Activated CD4-positive, alpha-beta T cell treated with anti-CD3 and anti-CD28 coated beads, Interleukin-2, amount 10 ng/mL, durations not matched to agents 24 days and 14 days (primary cell): ENCODE measurements at regions of chr22 and their contacts with region 1.

Region 1: DNA sequence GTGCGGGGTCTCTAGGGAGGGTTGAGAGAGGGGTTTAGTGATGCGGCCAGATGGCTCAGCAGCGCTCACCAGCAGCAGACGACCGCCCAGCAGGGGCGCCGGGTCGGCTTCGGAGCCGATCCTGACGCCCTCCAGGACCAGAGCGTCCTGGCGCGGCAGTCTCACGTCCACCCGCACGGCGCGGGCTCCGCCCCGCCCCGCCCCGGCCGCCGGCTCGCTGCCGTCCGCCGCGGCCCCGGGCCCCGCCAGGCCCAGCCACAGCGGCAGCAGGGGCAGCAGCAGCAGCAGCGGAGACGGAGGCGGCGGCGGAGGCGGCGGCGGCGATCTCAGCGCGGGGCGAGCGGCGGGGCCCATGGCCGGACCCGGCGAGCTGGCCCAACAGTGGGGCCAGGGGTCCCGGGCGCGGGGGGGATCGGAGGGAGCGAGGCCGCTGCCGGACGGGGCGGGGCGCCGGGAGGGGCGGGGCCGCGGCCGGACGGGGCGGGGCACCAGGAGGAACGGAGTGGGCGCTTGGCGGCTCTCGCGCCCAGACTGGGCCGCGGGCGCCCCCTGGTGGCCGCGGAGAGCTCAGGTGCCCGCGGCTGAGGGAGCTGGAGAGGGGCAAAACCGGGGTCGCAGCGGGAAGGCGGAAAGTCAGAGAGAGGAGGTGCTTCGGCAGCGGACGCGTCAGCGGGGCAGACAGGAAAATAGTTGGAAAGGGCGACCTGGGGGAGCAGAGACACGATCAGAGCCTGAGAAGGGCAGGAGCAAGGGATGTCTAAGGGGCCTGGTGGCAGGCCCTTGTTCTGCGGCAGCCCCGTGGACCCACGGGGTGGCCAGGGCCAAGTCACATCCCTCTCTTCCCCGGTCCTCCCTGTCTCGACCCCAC is at the start of gene RNF215:
- DNase-seq: peak; percentile 96
- H3K4me3 Mint-ChIP-seq: peak within 1 kb of the TSS; percentile 86
- H3K27ac Mint-ChIP-seq: peak within 1 kb of the TSS; percentile 79
- H3K4me1 Mint-ChIP-seq: peaks cover 19% of the 10 kb centered on the region
- H3K27me3 Mint-ChIP-seq: no peaks in the 10 kb centered on the region
- total RNA-seq, gene RNF215: 10.4 and 15.2 TPM in 2 replicates

Region 2: DNA sequence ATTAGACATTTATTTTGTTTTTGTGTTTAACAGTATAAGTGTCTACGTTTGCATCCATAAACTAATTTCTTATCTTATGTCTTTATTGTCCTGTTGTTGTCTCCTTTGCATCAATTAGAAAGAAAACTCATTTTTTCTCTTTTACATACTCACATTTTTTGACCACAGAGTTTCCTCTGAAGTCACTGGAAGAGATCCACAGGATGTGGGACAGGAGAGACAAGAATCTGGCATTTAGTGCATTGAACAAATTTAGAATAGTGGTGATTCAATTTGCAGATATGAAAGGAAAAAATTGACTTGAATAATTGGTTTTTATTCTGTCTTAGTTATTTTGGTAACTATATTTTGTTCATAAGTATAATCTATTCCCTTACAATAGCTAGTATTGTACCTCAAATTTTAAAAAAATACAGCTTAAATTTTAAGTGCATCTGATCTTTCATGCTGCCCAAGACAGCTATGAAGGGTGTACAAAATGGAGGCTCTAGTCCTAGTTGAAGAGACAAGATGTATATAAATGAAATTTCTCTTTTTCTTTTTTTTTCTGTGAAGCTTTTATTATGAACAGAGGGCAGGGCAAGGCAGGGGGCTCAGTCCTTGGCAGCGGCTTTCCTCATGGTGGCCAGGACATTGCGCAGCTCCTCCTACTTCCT is 282.6 kb before region 1 on chr22:
- intact Hi-C with region 1: loop called (anchors 10 kb)
- DNase-seq: peak; percentile 79
- H3K4me3 Mint-ChIP-seq: peak overlapping the region; percentile 54
- H3K27ac Mint-ChIP-seq: peak overlapping the region; percentile 89
- H3K4me1 Mint-ChIP-seq: peaks cover 45% of the 10 kb centered on the region
- H3K27me3 Mint-ChIP-seq: no peaks in the 10 kb centered on the region

Region 3: DNA sequence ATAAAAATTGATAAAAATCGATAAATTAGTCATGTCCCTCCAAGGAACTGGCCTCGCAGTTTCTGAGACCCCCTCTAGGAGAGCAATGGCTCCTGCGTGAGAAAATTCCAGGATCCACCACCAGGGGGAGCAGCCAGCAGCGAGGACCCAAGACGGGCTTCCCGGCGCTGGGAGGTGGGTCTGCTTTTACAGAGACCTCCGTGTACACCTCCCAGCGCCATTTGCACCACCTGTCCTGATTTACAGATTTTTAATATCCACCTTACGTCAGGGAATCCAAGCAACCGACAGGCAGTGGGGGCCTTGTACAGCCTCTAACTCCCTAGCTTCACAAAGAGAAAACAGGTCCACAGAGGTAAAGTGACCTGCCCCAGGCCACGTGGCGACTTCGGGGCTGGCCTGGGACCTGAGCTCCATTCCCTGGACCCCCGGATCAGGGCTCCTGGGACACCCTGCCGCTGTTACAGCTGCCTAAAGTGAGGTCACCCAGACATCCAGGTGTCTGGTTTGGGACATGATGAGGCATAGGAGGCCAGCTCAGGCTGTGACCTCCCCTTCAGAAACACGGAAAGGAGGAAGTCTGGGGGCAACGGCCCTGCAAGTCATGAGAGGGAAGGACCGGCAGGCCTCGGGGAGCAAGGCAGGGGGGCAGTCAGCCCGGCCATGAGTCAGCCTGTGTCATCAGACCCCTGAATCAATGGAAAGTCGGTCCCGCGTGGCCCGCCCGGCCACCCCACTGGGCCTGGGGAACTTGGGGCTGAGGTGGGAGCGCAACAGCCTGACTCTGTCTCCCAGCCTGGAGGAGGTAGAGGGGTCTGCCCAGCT is 124.1 kb before region 1 on chr22:
- intact Hi-C with region 1: loop called (anchors 1 kb)
- DNase-seq: peak; percentile 95
- H3K4me3 Mint-ChIP-seq: peak overlapping the region; percentile 99
- H3K27ac Mint-ChIP-seq: peak overlapping the region; percentile 90
- H3K4me1 Mint-ChIP-seq: peaks cover 59% of the 10 kb centered on the region
- H3K27me3 Mint-ChIP-seq: no peaks in the 10 kb centered on the region

Region 4: GRCh38 chr22:30356449-30357235 is 30.6 kb before region 1 on chr22 and contains the starts of genes CCDC157 and SF3A1:
- intact Hi-C with region 1: loop called (anchors 2 kb)
- DNase-seq: peak; percentile 98
- H3K4me3 Mint-ChIP-seq: peak within 1 kb of the TSS; percentile 95
- H3K27ac Mint-ChIP-seq: peak within 1 kb of the TSS; percentile 92
- H3K4me1 Mint-ChIP-seq: peaks cover 31% of the 10 kb centered on the region
- H3K27me3 Mint-ChIP-seq: peaks cover 2% of the 10 kb centered on the region
- total RNA-seq, gene CCDC157: 2.9 and 3.2 TPM in 2 replicates
- total RNA-seq, gene SF3A1: 314 and 319 TPM in 2 replicates

Region 5: DNA sequence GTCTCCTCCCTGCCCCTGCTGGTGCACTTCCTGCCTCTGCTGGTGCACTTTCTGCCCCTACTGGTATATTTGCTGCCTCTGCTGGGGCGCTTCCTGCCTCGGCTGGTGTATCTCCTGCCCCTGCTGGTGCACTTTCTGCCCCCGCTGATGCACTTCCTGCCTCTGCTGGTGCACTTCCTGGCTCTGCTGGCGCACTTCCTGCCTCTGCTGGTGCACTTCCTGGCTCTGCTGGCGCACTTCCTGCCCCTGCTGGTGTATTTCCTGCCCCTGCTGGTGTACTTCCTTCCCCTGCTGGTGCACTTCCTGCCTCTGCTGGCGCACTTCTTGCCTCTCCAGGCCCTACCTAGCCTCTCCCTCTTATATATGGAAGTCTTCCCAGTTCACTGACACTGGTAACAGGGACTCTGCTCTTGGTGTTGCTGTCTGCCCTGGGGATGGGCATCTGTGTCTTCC is 48.5 kb after region 1 on chr22:
- intact Hi-C with region 1: no loop called
- DNase-seq: peak; percentile 90
- H3K4me3 Mint-ChIP-seq: peak overlapping the region; percentile 79
- H3K27ac Mint-ChIP-seq: peak overlapping the region; percentile 94
- H3K4me1 Mint-ChIP-seq: peaks cover 21% of the 10 kb centered on the region
- H3K27me3 Mint-ChIP-seq: peaks cover 8% of the 10 kb centered on the region

Region 6: GRCh38 chr22:30485362-30485988 is 98.3 kb after region 1 on chr22:
- intact Hi-C with region 1: loop called (anchors 1 kb)
- DNase-seq: peak; percentile 94
- H3K4me3 Mint-ChIP-seq: no peak overlapping the region
- H3K27ac Mint-ChIP-seq: no peak overlapping the region
- H3K4me1 Mint-ChIP-seq: no peaks in the 10 kb centered on the region
- H3K27me3 Mint-ChIP-seq: peaks cover 3% of the 10 kb centered on the region